Transverse colon (tissue), 4 donors: ENCODE measurements at regions of chr19 and their contacts with region 1.

Region 1: GRCh38 chr19:53646144-53646543 is 14.3 kb downstream of the DPRX start:
- DNase-seq: no peak
- H3K4me3 ChIP-seq: no peak overlapping the region
- H3K27ac ChIP-seq: no peak overlapping the region
- H3K4me1 ChIP-seq: no peaks in the 10 kb centered on the region
- H3K27me3 ChIP-seq: no peaks in the 10 kb centered on the region
- CTCF ChIP-seq: no peak
- EP300 ChIP-seq: no peak
- POLR2A ChIP-seq: no peak

Region 2: DNA sequence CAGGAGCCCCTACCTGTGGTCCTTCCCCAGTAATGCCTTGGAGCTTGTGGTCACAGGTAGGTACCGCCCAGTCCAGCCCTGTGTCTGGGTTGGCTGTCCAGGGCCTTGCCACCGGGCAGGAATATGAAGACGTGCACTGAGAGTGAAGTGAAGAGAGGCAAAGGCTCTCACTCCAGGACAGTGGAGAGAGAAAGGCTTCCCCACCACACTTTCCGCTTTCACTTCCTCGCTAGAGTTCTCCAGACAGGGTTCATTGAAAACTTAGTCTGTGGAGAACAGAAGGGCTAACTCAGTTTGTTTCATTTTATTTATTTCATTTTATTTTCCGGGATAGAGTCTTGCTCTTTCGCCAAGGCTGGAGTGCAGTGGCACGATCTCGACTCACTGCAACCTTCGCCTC is 1242.1 kb after region 1 on chr19:
- in situ Hi-C with region 1: no loop called
- intact Hi-C with region 1: loop called (anchors 5 kb)
- DNase-seq: no peak
- H3K4me3 ChIP-seq: no peak overlapping the region
- H3K27ac ChIP-seq: no peak overlapping the region
- H3K4me1 ChIP-seq: no peaks in the 10 kb centered on the region
- H3K27me3 ChIP-seq: no peaks in the 10 kb centered on the region
- CTCF ChIP-seq: no peak
- EP300 ChIP-seq: no peak
- POLR2A ChIP-seq: no peak